ENCODE measurements at regions of chr6 and their contacts with region 1.

Region 1: DNA sequence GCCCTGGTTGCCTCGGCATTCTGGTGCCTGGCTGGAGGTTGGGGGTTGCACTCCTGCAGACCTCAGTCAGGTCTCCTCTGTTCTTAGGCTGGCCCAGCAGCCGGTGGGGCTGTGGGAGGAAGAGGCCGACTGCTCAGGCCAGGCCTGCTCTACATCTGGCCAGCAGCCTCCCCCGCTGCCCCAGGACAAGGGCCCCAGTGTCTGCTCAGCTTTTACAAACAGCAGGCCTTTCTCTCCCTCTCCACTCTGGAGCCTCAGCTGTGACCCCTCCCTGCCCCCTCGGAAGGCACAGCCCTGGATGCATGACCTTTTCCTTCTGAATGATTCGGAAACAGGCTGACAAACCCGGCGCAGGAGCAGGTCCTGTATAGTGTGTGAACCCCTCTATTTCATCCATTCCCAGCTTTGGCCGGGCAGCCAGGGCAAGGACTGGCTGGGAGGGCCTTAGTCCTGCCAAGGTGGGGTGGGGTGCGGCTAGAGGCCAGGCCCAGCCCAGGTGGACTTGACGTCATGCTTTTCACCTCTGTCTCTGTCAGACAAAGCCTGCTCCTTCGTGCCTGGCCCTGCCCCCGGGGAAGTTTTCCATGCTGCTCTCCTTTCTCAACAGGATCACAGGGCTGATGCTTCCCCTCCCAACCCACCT is 10.2 kb upstream of the ITPR3 start:
- DNase-seq: peak in 1 of 2 donors; percentile 59
- H3K4me3 ChIP-seq: no peak overlapping the region
- H3K27ac ChIP-seq: no peak overlapping the region
- H3K4me1 ChIP-seq: peaks cover 0 to 7% (median 3%) of the 10 kb centered on the region in 4 donors
- H3K27me3 ChIP-seq: peaks cover 0 to 7% of the 10 kb centered on the region in 2 donors
- CTCF ChIP-seq: no peak

Region 2: GRCh38 chr6:32785781-32786533 is 824.9 kb before region 1 on chr6:
- intact Hi-C with region 1: no loop called
- DNase-seq: peak in 1 of 2 donors; percentile 36
- H3K4me3 ChIP-seq: no peak overlapping the region
- H3K27ac ChIP-seq: no peak overlapping the region
- H3K4me1 ChIP-seq: no peaks in the 10 kb centered on the region
- H3K27me3 ChIP-seq: peaks cover 0 to 4% of the 10 kb centered on the region in 2 donors
- CTCF ChIP-seq: peak; percentile 37 to 43

Region 3: DNA sequence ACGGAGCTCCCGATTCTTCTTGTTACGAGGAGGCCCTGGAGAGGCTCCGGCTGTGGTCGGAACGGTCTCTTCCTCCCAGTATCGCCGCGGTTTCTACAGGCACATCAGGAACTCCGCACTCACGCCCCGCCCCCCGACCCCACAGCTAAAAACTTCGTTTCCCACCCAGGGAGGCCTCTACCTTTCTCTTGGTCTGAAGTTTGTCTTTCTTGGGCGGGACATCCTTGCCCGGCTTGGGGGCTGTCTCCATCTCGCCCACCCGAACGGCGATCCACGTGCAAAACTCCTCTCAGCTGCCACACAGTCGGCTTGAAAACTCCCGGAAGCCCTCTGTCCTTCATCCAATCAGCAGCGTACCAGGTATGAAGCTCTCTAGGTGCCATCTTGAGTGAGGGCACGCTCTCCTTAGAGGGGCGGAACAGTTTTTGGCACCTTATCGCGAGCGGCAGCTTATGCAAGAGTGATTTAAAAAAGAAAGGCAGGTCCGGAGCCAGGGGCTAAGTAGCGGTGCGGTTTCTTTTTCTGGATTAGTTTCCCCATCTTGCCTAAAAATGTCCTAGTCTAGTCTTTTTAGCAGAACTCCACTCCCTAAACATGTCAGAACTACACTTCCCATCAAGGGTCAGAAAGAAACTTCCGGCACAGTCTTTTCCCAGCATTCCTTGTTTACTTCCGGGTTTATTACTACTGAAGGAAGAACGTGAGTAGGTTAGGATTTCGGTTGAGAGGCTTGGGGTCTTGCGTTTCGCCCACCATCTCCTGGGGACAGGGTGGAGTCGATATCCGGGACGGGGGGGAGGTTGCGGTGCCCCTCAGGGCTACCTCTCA is 321.8 kb before region 1 on chr6 and contains the starts of genes PFDN6 and WDR46:
- intact Hi-C with region 1: no loop called
- DNase-seq: peak; percentile 84 to 90
- H3K4me3 ChIP-seq: peak within 1 kb of the TSS; percentile 73 to 79
- H3K27ac ChIP-seq: peak within 1 kb of the TSS; percentile 69 to 81
- H3K4me1 ChIP-seq: peaks cover 4 to 25% (median 22%) of the 10 kb centered on the region in 4 donors
- H3K27me3 ChIP-seq: no peaks in the 10 kb centered on the region
- CTCF ChIP-seq: no peak

Region 4: DNA sequence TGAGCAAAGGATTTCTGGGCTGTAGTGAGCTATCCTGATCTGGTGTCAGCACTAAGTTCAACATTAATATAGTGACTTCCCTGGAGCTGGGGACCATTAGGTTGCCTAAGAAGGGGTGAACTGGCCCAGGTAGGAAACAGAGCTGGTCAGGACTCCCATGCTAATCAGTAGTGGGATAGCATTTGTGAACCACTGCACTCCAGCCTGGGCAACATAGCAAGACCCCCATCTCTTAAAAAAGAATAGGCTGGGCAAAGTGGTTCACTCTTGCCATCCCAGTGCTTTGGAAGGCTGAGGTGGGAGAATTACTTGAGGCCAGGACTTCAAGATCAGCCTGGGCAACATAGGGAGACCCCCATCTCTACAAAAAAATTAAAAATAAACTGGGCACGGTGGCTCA is 70.1 kb before region 1 on chr6:
- intact Hi-C with region 1: loop called (anchors 2 kb)
- DNase-seq: no peak
- H3K4me3 ChIP-seq: no peak overlapping the region
- H3K27ac ChIP-seq: no peak overlapping the region
- H3K4me1 ChIP-seq: no peaks in the 10 kb centered on the region
- H3K27me3 ChIP-seq: no peaks in the 10 kb centered on the region
- CTCF ChIP-seq: no peak